Activated CD8-positive, alpha-beta T cell treated with anti-CD3 and anti-CD28 coated beads for 36 hours (primary cell): ENCODE measurements at regions of chr3 and their contacts with region 1.

Region 1: GRCh38 chr3:149224736-149225594 is 3.3 kb upstream of the CP start:
- DNase-seq: peak; percentile 47
- ATAC-seq: peak; percentile 91
- H3K4me3 Mint-ChIP-seq: peak overlapping the region; percentile 80
- H3K27ac Mint-ChIP-seq: peak overlapping the region; percentile 92
- H3K4me1 Mint-ChIP-seq: peaks cover 25% of the 10 kb centered on the region
- H3K27me3 Mint-ChIP-seq: peaks cover 2% of the 10 kb centered on the region
- CTCF ChIP-seq: no peak

Region 2: GRCh38 chr3:149129326-149130205 is 95.4 kb before region 1 on chr3 and contains the start of gene HPS3:
- CTCF ChIA-PET with region 1: no interaction called
- POLR2A ChIA-PET with region 1: no interaction called
- intact Hi-C with region 1: no loop called
- DNase-seq: peak; percentile 91
- ATAC-seq: peak; percentile 89
- H3K4me3 Mint-ChIP-seq: peak within 1 kb of the TSS; percentile 95
- H3K27ac Mint-ChIP-seq: peak within 1 kb of the TSS; percentile 89
- H3K4me1 Mint-ChIP-seq: peaks cover 36% of the 10 kb centered on the region
- H3K27me3 Mint-ChIP-seq: peaks cover 2% of the 10 kb centered on the region
- CTCF ChIP-seq: no peak
- total RNA-seq, gene HPS3: 16.4 to 18.2 TPM

Region 3: GRCh38 chr3:149273096-149273751 is 48.3 kb after region 1 on chr3:
- CTCF ChIA-PET with region 1: interaction called, 3 read pairs
- POLR2A ChIA-PET with region 1: no interaction called
- intact Hi-C with region 1: loop called (anchors 5 kb)
- DNase-seq: peak; percentile 27
- ATAC-seq: peak; percentile 95
- H3K4me3 Mint-ChIP-seq: no peak overlapping the region
- H3K27ac Mint-ChIP-seq: no peak overlapping the region
- H3K4me1 Mint-ChIP-seq: peaks cover 10% of the 10 kb centered on the region
- H3K27me3 Mint-ChIP-seq: no peaks in the 10 kb centered on the region
- CTCF ChIP-seq: peak; percentile 97